ENCODE measurements at regions of chr20 and their contacts with region 1.

Region 1: DNA sequence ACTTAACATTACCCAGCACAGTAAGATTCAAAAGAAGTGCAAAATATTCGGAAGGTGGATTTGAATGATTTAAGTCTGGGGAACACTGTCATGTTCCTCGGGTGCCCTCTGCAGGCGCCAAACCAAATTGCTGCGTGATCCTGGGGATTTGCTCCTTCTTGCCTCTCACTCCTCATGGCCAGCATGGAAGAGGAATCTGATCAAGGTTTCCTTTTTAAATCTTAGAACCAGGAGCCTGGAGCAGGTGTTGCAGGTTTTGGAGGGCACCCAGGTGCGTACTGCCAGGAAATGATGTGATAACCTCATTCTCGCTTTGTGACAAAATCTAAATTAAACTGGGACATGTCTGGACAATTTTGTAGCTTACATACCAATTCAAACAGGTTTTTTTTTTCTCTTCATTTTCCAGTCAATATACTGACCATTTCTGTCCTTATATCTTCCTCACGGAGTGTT is 8.1 kb upstream of the PFDN4 start:
- DNase-seq: peak; percentile 77
- H3K4me3 Mint-ChIP-seq: no peak overlapping the region
- H3K27ac Mint-ChIP-seq: no peak overlapping the region
- H3K4me1 Mint-ChIP-seq: peaks cover 19% of the 10 kb centered on the region
- H3K27me3 Mint-ChIP-seq: no peaks in the 10 kb centered on the region
- CTCF ChIP-seq: peak; percentile 91

Region 2: DNA sequence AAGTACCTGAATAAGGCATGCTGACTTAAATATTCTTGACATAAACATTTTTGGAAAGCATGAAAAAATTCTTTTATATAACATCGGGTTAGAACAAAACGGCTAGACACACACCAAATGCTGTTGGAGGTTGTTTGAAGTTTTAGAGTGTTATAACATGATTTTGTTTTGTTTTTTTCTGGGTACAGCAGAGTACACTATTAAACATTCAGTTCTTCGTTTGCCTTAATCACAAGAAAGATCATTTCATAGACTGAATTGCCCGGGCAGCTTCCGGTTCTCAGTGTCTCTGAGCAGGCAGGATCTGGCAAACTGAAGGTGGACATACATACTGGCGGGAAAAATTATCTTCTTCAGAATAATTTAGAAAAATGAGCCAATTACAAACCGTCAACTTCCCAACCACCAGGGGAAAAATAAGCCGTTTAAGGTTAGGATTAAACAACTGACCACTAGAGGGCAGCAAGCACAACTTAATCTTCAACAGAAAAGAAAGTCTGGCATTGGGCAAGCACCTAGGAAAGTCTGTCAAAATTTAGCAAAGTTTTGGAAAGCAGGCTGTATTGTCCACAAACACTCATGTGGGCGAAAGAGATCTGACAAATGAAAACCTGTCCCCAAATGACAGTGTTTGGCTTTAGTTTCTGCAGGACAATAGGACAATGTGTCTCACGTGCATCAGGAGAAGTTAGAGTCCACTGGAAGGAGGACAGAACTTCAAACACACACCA is 621.1 kb before region 1 on chr20:
- CTCF ChIA-PET with region 1: interaction called, 5 read pairs
- POLR2A ChIA-PET with region 1: no interaction called
- intact Hi-C with region 1: loop called (anchors 2 kb)
- DNase-seq: peak; percentile 91
- H3K4me3 Mint-ChIP-seq: peak overlapping the region; percentile 54
- H3K27ac Mint-ChIP-seq: peak overlapping the region; percentile 90
- H3K4me1 Mint-ChIP-seq: peaks cover 30% of the 10 kb centered on the region
- H3K27me3 Mint-ChIP-seq: no peaks in the 10 kb centered on the region
- CTCF ChIP-seq: peak; percentile 92

Region 3: GRCh38 chr20:54070187-54070987 is 129.4 kb before region 1 on chr20 and contains the start of gene BCAS1:
- CTCF ChIA-PET with region 1: interaction called, 20 read pairs
- POLR2A ChIA-PET with region 1: no interaction called
- intact Hi-C with region 1: no loop called
- DNase-seq: no peak
- H3K4me3 Mint-ChIP-seq: no peak within 1 kb of the TSS
- H3K27ac Mint-ChIP-seq: no peak within 1 kb of the TSS
- H3K4me1 Mint-ChIP-seq: peaks cover 7% of the 10 kb centered on the region
- H3K27me3 Mint-ChIP-seq: no peaks in the 10 kb centered on the region
- CTCF ChIP-seq: no peak
- total RNA-seq, gene BCAS1: not detected in 2 replicates

Region 4: GRCh38 chr20:54103067-54103761 is 96.5 kb before region 1 on chr20:
- CTCF ChIA-PET with region 1: interaction called, 1,436 read pairs
- POLR2A ChIA-PET with region 1: interaction called, 76 read pairs
- intact Hi-C with region 1: no loop called
- DNase-seq: peak; percentile 83
- H3K4me3 Mint-ChIP-seq: no peak overlapping the region
- H3K27ac Mint-ChIP-seq: no peak overlapping the region
- H3K4me1 Mint-ChIP-seq: peaks cover 21% of the 10 kb centered on the region
- H3K27me3 Mint-ChIP-seq: no peaks in the 10 kb centered on the region
- CTCF ChIP-seq: peak; percentile 77

Region 5: DNA sequence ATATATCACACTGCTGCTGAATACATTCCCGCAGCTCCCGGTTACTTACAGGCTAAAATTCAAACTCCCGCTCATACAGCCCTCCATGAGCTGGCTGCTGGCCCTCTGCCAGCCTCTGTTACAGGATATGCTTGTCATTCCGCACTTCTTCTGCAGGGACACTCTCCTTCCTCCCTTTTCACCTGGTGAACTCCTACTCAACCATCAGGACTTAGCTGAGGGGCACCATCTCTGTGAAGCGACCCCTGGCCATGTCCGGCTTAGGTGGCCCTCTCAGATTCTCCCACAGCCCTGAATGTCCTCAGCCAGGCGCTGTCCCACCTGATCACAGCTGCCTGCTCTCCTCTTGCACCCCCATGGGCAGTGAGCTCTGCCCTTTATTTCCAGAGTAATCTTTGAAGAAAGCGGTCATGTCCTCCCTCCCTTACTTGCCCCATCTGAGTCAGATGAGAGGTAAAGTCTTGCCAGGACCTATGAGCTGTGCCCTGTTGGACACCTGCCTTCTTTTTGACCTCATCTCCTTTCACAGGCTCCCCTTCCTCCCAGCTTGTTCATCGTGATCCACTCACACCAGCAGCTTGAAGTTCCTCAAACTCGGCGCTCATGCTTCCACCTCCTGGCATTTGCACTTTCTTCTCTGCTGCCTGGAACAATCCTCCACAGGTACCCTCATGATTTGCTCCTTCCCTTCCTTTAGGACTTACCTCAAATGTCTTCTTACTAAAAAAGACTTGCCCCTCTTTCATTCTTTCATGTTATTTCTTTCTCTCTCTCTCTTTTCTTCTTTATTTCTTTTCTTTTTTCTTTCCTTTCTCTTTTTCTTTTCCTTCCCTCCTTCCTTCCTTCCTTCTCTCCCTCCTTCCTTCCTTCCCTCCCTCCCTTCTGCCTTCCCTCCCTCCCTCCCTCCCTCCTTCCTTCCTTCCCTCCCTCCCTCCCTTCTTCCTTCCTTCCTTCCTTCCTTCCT is 31.6 kb before region 1 on chr20:
- CTCF ChIA-PET with region 1: interaction called, 35 read pairs
- POLR2A ChIA-PET with region 1: interaction called, 3 read pairs
- intact Hi-C with region 1: no loop called
- DNase-seq: peak; percentile 86
- H3K4me3 Mint-ChIP-seq: peak overlapping the region; percentile 28
- H3K27ac Mint-ChIP-seq: peak overlapping the region; percentile 50
- H3K4me1 Mint-ChIP-seq: peaks cover 18% of the 10 kb centered on the region
- H3K27me3 Mint-ChIP-seq: no peaks in the 10 kb centered on the region
- CTCF ChIP-seq: no peak

Region 6: DNA sequence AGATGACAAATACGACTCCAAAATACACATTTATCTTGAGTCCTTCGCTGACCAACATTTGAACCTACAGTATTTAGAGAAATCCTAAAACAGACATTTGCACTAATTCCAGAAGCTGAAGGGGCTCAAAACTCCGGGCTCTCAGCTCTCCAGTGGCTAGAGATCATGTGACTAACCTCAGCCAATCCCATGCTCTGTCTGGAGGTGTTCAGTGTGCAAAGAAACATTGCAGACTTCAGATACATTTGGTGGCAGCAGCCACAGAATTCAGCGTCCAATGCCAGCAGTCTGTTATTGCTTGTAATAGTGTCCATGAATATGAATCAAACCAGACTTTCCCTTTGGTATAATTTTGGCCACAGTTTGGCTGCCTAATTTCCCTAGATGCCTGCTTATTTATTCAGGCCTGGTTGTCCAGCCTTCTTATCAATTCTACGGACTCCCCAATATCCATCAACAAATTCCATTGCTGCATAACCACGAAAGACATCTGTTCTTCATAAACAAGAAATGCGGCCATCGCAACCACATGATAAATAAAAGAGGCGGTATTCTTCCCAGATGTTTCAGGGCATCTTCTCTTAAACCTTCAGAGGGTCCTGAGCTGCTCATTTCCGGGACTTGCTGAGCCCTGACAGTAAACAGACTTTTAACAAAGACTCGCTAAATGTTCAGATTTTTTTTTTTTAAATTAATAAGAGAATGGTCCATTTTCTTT is 11.5 kb before region 1 on chr20:
- CTCF ChIA-PET with region 1: interaction called, 16 read pairs
- POLR2A ChIA-PET with region 1: interaction called, 3 read pairs
- intact Hi-C with region 1: no loop called
- DNase-seq: no peak
- H3K4me3 Mint-ChIP-seq: no peak overlapping the region
- H3K27ac Mint-ChIP-seq: no peak overlapping the region
- H3K4me1 Mint-ChIP-seq: peaks cover 24% of the 10 kb centered on the region
- H3K27me3 Mint-ChIP-seq: no peaks in the 10 kb centered on the region
- CTCF ChIP-seq: no peak

Region 7: DNA sequence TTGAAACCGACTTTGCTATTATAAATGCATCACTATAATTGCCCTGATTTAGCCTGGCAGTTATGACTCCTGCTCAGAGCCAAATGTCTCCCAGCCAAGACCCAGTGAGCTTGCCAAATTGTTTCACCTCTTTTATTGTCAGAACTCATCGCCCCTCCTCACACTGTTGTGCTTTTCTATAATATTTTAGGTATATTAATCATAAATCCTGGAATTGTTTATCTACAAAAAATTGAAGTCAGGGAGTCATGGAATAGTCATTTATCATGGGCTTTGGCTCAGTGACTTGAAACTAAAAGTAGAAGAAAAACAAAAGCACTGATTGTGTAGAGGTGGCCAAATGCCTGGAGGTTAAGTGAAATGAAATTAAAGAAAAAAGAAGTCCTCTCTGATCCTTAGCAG is 93.8 kb after region 1 on chr20:
- CTCF ChIA-PET with region 1: no interaction called
- POLR2A ChIA-PET with region 1: no interaction called
- intact Hi-C with region 1: no loop called
- DNase-seq: peak; percentile 2
- H3K4me3 Mint-ChIP-seq: no peak overlapping the region
- H3K27ac Mint-ChIP-seq: no peak overlapping the region
- H3K4me1 Mint-ChIP-seq: peaks cover 7% of the 10 kb centered on the region
- H3K27me3 Mint-ChIP-seq: no peaks in the 10 kb centered on the region
- CTCF ChIP-seq: no peak